Endothelial cell of umbilical vein (primary cell): ENCODE measurements at regions of chr3 and their contacts with region 1.

Region 1: GRCh38 chr3:71069797-71070196 is 513.7 kb downstream of the FOXP1 start:
- DNase-seq: peak; percentile 74
- H3K4me3 ChIP-seq: no peak overlapping the region
- H3K27ac ChIP-seq: no peak overlapping the region
- H3K4me1 ChIP-seq: peaks cover 30% of the 10 kb centered on the region
- H3K27me3 ChIP-seq: no peaks in the 10 kb centered on the region
- CTCF ChIP-seq: peak; percentile 42 to 52
- POLR2A ChIP-seq: no peak

Region 2: GRCh38 chr3:69462022-69462825 is 1607.6 kb before region 1 on chr3:
- CTCF ChIA-PET with region 1: no interaction called
- POLR2A ChIA-PET with region 1: no interaction called
- dilution Hi-C with region 1: no loop called
- intact Hi-C with region 1: loop called (anchors 10 kb)
- DNase-seq: no peak
- H3K4me3 ChIP-seq: no peak overlapping the region
- H3K27ac ChIP-seq: peak overlapping the region; percentile 4
- H3K4me1 ChIP-seq: peaks cover 29% of the 10 kb centered on the region
- H3K27me3 ChIP-seq: no peaks in the 10 kb centered on the region
- CTCF ChIP-seq: no peak
- POLR2A ChIP-seq: no peak

Region 3: GRCh38 chr3:70726961-70727360 is 342.8 kb before region 1 on chr3:
- CTCF ChIA-PET with region 1: no interaction called
- POLR2A ChIA-PET with region 1: no interaction called
- dilution Hi-C with region 1: no loop called
- intact Hi-C with region 1: no loop called
- DNase-seq: no peak
- H3K4me3 ChIP-seq: no peak overlapping the region
- H3K27ac ChIP-seq: no peak overlapping the region
- H3K4me1 ChIP-seq: no peaks in the 10 kb centered on the region
- H3K27me3 ChIP-seq: no peaks in the 10 kb centered on the region
- CTCF ChIP-seq: no peak
- POLR2A ChIP-seq: no peak

Region 4: GRCh38 chr3:71160800-71161546 is 91.2 kb after region 1 on chr3:
- CTCF ChIA-PET with region 1: no interaction called
- POLR2A ChIA-PET with region 1: no interaction called
- dilution Hi-C with region 1: no loop called
- intact Hi-C with region 1: no loop called
- DNase-seq: no peak
- H3K4me3 ChIP-seq: no peak overlapping the region
- H3K27ac ChIP-seq: no peak overlapping the region
- H3K4me1 ChIP-seq: no peaks in the 10 kb centered on the region
- H3K27me3 ChIP-seq: no peaks in the 10 kb centered on the region
- CTCF ChIP-seq: no peak
- POLR2A ChIP-seq: no peak

Region 5: GRCh38 chr3:71288269-71288930 is 218.6 kb after region 1 on chr3:
- CTCF ChIA-PET with region 1: no interaction called
- POLR2A ChIA-PET with region 1: no interaction called
- dilution Hi-C with region 1: no loop called
- intact Hi-C with region 1: no loop called
- DNase-seq: no peak
- H3K4me3 ChIP-seq: no peak overlapping the region
- H3K27ac ChIP-seq: no peak overlapping the region
- H3K4me1 ChIP-seq: peaks cover 5% of the 10 kb centered on the region
- H3K27me3 ChIP-seq: no peaks in the 10 kb centered on the region
- CTCF ChIP-seq: no peak
- POLR2A ChIP-seq: no peak

Region 6: DNA sequence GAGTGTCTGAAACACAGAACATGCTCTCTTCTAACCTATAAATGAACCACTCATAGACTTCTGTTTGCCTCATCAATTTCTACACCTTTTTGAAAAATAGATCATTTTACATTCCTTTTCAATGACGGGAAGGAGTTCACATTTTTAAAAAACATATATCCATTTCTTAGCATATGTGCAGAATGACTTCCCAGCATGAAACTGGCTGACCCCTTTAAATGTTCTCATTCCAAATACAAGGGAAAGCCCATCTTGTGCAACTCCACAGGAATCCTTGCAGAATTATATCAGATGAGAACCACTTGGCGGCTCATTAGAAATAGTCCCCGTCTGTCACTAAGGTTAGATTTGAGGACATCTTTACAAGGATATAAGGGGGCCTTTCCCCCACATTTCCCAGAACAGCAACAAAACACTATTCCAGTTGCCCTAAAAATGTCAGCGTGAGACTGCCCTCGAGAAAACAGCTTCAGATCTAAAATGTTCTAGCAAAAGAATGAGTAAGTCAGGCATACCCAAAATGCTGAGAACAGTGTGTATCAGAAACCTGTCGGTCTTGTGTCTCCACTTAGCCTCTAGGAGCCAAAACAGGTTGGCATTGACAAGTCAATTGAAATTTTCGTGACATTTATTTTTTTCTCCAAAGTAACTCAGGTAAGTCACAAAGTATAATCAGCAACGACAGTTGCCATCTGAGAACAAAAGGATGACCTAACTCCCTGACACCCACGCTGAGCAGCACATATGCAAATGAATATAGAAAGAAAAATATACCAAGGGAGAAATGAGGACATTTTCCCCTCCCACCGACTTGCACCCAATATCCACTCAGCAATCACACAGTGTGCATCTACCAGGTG is 450.6 kb after region 1 on chr3:
- CTCF ChIA-PET with region 1: no interaction called
- POLR2A ChIA-PET with region 1: no interaction called
- dilution Hi-C with region 1: no loop called
- intact Hi-C with region 1: no loop called
- DNase-seq: no peak
- H3K4me3 ChIP-seq: no peak overlapping the region
- H3K27ac ChIP-seq: no peak overlapping the region
- H3K4me1 ChIP-seq: peaks cover 30% of the 10 kb centered on the region
- H3K27me3 ChIP-seq: no peaks in the 10 kb centered on the region
- CTCF ChIP-seq: no peak
- POLR2A ChIP-seq: no peak